Activated naive CD8-positive, alpha-beta T cell treated with anti-CD3 and anti-CD28 coated beads, Interleukin-2, amount 10 ng/mL, durations not matched to agents 7 days and 5 days (primary cell): ENCODE measurements at regions of chr3 and their contacts with region 1.

Region 1: GRCh38 chr3:141487521-141488252 is 860 bp downstream of the RASA2 start:
- DNase-seq: peak; percentile 89
- ATAC-seq: peak; percentile 73
- H3K4me3 Mint-ChIP-seq: peak overlapping the region; percentile 91
- H3K27ac Mint-ChIP-seq: peak overlapping the region; percentile 97
- H3K4me1 Mint-ChIP-seq: peaks cover 60% of the 10 kb centered on the region
- H3K27me3 Mint-ChIP-seq: no peaks in the 10 kb centered on the region

Region 2: GRCh38 chr3:141311496-141312353 is 176.0 kb before region 1 on chr3:
- POLR2A ChIA-PET with region 1: interaction called, 14 read pairs
- DNase-seq: peak; percentile 96
- ATAC-seq: peak; percentile 93
- H3K4me3 Mint-ChIP-seq: peak overlapping the region; percentile 99
- H3K27ac Mint-ChIP-seq: peak overlapping the region; percentile 100
- H3K4me1 Mint-ChIP-seq: peaks cover 48% of the 10 kb centered on the region
- H3K27me3 Mint-ChIP-seq: no peaks in the 10 kb centered on the region

Region 3: DNA sequence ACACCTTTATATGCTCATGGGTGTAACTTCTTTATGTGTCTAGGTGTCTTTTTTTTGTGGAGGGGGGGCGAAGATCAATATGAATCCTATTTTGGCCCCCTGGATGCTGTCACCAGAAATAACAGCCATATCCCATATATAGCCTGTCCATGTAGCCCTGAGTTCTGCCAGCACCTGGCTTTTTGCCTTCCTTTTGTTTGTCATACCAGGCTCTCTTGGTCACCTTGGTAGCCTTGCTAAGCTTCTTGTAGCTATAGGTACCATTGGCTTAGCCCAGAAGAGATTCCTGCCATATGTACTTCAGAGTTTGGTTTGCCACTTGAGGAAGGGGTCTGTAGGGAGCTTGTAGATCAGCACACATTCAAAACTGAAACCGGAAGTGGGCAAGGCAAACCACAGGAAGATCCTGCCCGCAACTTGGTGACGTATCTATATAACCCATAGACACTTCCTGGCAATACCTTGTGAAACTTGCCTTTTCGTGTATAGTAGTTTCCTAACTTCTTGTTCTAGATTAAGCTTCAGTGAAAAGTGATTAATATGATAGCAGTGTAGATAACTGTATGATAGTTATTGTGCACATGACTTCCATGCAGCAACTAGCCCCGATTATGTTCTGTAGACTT is 11.0 kb after region 1 on chr3:
- POLR2A ChIA-PET with region 1: interaction called, 115 read pairs
- DNase-seq: peak; percentile 81
- ATAC-seq: peak; percentile 87
- H3K4me3 Mint-ChIP-seq: peak overlapping the region; percentile 82
- H3K27ac Mint-ChIP-seq: peak overlapping the region; percentile 95
- H3K4me1 Mint-ChIP-seq: peaks cover 65% of the 10 kb centered on the region
- H3K27me3 Mint-ChIP-seq: no peaks in the 10 kb centered on the region

Region 4: DNA sequence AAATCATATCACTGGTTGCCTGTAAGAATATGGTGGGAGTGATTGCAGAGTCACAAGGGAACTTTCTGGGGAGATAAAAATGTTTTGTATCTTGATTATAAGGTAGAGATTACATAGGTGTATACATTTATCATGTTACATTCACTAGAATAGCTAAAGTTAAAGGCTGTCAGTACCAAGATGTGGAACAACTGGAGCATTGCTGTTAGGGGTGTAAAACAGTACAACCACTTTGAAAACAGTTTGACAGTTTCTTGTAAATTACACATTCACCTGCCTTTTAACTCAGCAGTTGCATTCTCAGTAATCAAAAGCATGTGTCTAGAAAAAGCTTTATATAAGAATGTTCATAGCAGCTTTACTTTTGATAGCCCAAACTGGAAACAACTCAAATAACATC is 26.7 kb after region 1 on chr3:
- POLR2A ChIA-PET with region 1: interaction called, 10 read pairs
- DNase-seq: no peak
- ATAC-seq: no peak
- H3K4me3 Mint-ChIP-seq: no peak overlapping the region
- H3K27ac Mint-ChIP-seq: no peak overlapping the region
- H3K4me1 Mint-ChIP-seq: peaks cover 19% of the 10 kb centered on the region
- H3K27me3 Mint-ChIP-seq: no peaks in the 10 kb centered on the region

Region 5: DNA sequence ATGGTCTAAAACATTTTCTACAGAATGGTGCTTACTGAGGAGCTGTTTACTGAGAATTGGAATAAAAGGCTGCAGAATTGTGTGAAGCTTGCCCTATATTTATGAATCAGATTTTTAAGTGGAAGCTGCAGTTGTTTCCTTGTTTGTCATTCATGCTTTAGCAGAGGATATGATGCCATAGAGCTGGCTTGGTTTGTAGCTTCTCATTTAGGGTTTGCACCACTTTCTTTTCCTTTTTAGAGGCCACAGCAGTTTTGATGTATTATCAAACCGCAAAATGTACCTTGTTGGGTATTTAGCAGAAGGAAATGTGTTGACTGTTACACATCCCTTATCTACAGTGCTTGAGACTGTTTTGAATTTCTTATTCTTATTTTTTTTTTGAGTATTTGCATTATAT is 65.4 kb after region 1 on chr3:
- POLR2A ChIA-PET with region 1: interaction called, 37 read pairs
- DNase-seq: no peak
- ATAC-seq: peak; percentile 85
- H3K4me3 Mint-ChIP-seq: peak overlapping the region; percentile 69
- H3K27ac Mint-ChIP-seq: peak overlapping the region; percentile 90
- H3K4me1 Mint-ChIP-seq: peaks cover 42% of the 10 kb centered on the region
- H3K27me3 Mint-ChIP-seq: no peaks in the 10 kb centered on the region